IMR-90 (cell line): ENCODE measurements at regions of chr13 and their contacts with region 1.

Region 1: GRCh38 chr13:74372511-74372910 is 238.3 kb upstream of the KLF12 start:
- DNase-seq: no peak
- ATAC-seq: no peak
- H3K4me3 ChIP-seq: no peak overlapping the region
- H3K27ac ChIP-seq: no peak overlapping the region
- H3K4me1 ChIP-seq: no peaks in the 10 kb centered on the region
- H3K27me3 ChIP-seq: no peaks in the 10 kb centered on the region
- CTCF ChIP-seq: no peak
- POLR2A ChIP-seq: no peak
- RAD21 ChIP-seq: no peak

Region 2: GRCh38 chr13:74336546-74336945 is 36.0 kb before region 1 on chr13:
- CTCF ChIA-PET with region 1: no interaction called
- POLR2A ChIA-PET with region 1: interaction called, 17 read pairs
- dilution Hi-C with region 1: no loop called
- in situ Hi-C with region 1: no loop called
- intact Hi-C with region 1: no loop called
- DNase-seq: no peak
- ATAC-seq: no peak
- H3K4me3 ChIP-seq: no peak overlapping the region
- H3K27ac ChIP-seq: no peak overlapping the region
- H3K4me1 ChIP-seq: no peaks in the 10 kb centered on the region
- H3K27me3 ChIP-seq: no peaks in the 10 kb centered on the region; the same call in 1 of the 2 replicates
- CTCF ChIP-seq: no peak
- POLR2A ChIP-seq: no peak
- RAD21 ChIP-seq: no peak